ENCODE measurements at regions of chr12 and their contacts with region 1.

Region 1: GRCh38 chr12:102061560-102062418 is at the start of gene WASHC3:
- DNase-seq: peak; percentile 63
- H3K4me3 ChIP-seq: peak within 1 kb of the TSS; percentile 64
- H3K27me3 ChIP-seq: no peaks in the 10 kb centered on the region
- CTCF ChIP-seq: no peak
- polyA plus RNA-seq, gene WASHC3: 34.5 and 66.9 TPM in 2 replicates

Region 2: DNA sequence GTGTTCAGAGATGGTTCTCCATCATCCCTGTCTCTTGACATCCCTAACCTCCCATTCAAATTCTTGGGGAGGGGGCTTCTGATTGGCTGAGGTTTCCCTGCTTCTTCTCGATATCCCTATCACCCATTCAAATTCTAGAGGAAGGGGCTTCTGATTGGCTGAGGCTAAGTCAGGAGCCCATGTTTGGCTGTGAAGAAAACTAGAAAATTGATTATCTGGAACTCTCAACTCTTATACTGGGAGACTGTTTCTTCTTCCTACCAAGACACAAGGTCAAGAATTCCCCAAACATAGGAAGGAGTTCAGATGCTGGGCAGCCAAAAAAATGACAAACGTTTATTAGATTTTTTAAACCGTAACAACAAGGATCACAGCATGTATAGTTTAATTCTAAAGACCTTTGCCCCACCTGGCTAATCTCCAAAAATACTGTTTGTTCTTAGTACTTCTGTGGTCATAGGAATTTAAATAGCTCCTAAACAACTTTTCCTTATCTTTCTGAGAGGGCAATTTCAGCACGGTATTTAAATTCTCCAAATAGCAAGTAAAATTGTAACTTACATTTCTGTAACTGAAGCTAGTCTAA is 560.3 kb before region 1 on chr12:
- CTCF ChIA-PET with region 1: no interaction called
- POLR2A ChIA-PET with region 1: no interaction called
- DNase-seq: no peak
- H3K4me3 ChIP-seq: no peak overlapping the region
- H3K27me3 ChIP-seq: no peaks in the 10 kb centered on the region
- CTCF ChIP-seq: no peak

Region 3: DNA sequence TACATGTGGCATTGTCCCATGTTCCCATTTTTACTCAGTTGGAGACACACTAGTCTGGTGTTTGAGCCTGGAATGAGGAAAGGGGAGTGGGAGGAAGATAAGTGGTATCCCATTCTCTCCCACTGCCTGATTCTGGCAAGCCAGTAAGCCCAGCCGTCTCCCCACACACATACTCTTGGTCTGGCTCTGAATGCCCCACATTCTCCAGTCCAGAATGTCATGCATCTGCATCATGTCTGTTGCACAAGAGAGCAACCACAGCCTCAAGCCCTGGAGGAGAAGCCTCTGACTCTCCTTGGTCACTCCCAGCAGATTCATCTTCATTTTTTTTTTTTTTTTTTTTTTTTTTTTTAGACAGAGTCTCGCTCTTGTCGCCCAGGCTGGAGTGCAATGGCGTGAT is 136.4 kb before region 1 on chr12:
- CTCF ChIA-PET with region 1: no interaction called
- POLR2A ChIA-PET with region 1: interaction called, 20 read pairs
- DNase-seq: peak; percentile 97
- H3K4me3 ChIP-seq: no peak overlapping the region
- H3K27me3 ChIP-seq: no peaks in the 10 kb centered on the region
- CTCF ChIP-seq: no peak